ENCODE measurements at regions of chr15 and their contacts with region 1.

Region 1: GRCh38 chr15:64144565-64145281 is 6.8 kb upstream of the SNX22 start:
- DNase-seq: no peak
- H3K4me3 ChIP-seq: no peak overlapping the region
- H3K27ac ChIP-seq: no peak overlapping the region
- H3K4me1 ChIP-seq: no peaks in the 10 kb centered on the region
- H3K27me3 ChIP-seq: no peaks in the 10 kb centered on the region
- CTCF ChIP-seq: no peak
- EP300 ChIP-seq: no peak
- POLR2A ChIP-seq: no peak
- RAD21 ChIP-seq: no peak

Region 2: GRCh38 chr15:64134345-64134829 is 10.3 kb before region 1 on chr15:
- CTCF ChIA-PET with region 1: interaction called, 18 read pairs
- POLR2A ChIA-PET with region 1: interaction called, 7 read pairs
- DNase-seq: no peak
- H3K4me3 ChIP-seq: no peak overlapping the region
- H3K27ac ChIP-seq: no peak overlapping the region
- H3K4me1 ChIP-seq: peaks cover 0 to 6% (median 2%) of the 10 kb centered on the region in 4 experiments; a peak in 1 of 7 replicates
- H3K27me3 ChIP-seq: no peaks in the 10 kb centered on the region
- CTCF ChIP-seq: no peak
- EP300 ChIP-seq: no peak
- POLR2A ChIP-seq: no peak
- RAD21 ChIP-seq: no peak

Region 3: GRCh38 chr15:64247906-64248541 is 103.3 kb after region 1 on chr15:
- CTCF ChIA-PET with region 1: no interaction called
- POLR2A ChIA-PET with region 1: no interaction called
- DNase-seq: peak in 1 of 2 experiments; percentile 9
- H3K4me3 ChIP-seq: no peak overlapping the region; a peak in 1 of 8 replicates
- H3K27ac ChIP-seq: peak overlapping the region; percentile 40; the same call in 1 of the 2 replicates
- H3K4me1 ChIP-seq: peaks cover 0 to 12% (median 5%) of the 10 kb centered on the region in 4 experiments; a peak in 5 of 7 replicates
- H3K27me3 ChIP-seq: no peaks in the 10 kb centered on the region
- CTCF ChIP-seq: no peak
- EP300 ChIP-seq: peak in 1 of 2 experiments; percentile 84; a peak in 1 of 3 replicates
- POLR2A ChIP-seq: no peak
- RAD21 ChIP-seq: no peak